ENCODE measurements at regions of chr11 and their contacts with region 1.

Region 1: DNA sequence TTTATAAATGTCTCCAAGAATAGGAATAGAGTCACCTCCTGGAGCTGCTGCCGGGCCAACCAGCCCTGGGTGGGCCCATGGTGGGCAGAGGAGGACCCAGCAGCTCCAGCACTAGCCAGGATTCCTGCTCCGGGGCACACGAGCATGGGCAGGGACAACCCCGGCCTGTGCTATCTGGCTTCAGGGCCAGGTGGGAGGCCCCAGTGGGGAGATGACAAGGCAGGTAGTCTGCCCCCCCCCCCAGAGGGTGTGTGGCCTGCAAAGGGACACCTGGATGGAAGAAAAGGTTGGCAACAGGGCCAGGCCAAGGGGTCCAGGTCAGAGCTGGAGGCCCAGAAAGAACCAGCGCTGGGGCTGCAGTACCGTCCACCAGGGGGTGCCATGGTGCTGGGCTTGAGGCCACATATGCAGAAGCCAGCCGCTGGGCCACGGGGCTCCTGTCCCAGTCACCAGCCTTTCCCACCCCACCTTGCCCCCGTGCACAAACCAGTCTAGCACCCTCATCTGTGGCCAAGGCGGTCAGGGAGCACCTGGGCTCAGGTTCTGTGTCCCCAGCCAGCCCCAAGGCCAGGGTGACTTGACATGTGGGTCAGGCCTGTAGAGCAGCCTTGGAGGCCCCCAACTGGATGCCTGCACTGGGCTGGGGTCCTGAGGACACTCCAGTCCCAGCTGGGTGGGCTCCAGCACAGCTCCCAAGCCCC is 3.5 kb downstream of the TSPAN32 start:
- DNase-seq: peak; percentile 74 to 90
- ATAC-seq: peak; percentile 16 to 66 (median 61)
- H3K4me3 ChIP-seq: peak overlapping the region; percentile 26
- H3K4me3 Mint-ChIP-seq: peak overlapping the region; percentile 98
- H3K27ac ChIP-seq: peak overlapping the region; percentile 42
- H3K27ac Mint-ChIP-seq: peak overlapping the region; percentile 86 to 96
- H3K4me1 ChIP-seq: peaks cover 76% of the 10 kb centered on the region
- H3K4me1 Mint-ChIP-seq: peaks cover 17 to 63% of the 10 kb centered on the region in 2 donors
- H3K27me3 ChIP-seq: no peaks in the 10 kb centered on the region
- H3K27me3 Mint-ChIP-seq: no peaks in the 10 kb centered on the region
- CTCF ChIP-seq: peak; percentile 65

Region 2: DNA sequence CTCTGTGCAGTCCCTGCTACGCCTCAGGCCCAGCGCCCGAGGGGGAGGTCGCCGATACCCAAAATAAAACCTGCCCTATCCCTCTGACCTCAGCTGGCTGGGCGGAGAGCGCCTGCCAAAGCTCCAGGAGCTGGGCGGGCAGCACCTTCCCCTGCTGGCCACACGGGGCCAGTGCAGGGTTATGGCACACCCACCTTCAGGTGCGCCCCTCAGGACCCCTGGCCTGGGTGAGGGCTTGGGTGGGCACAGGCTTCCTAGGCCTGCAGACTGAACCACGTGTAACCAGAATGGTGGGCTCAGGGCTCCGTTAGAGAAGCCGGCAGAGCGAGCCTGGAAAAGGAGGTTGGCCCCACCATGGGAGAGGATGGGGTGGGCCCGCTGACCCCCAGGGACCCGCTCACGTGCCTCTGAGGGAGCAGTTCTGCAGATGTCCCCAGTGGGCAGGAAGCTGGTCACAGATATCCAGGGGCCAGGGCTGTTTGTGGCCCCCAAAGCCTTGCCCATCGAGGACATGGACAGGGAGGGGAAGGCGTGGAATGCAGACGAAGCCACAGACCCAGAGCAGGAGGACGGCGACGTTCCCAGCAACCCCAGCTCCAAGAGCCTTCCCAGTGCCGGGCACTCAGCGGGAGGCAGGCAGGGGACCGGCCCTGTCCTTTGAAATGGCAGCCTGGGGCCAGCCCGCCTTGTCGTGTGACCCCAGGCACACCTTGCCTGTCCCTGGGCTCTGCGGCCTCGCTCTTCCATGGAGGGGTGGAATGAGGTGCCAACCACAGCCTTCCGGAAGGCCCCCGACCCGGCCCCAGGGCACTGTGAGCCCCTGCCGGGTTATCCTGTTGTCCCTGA is 387.4 kb before region 1 on chr11:
- intact Hi-C with region 1: no loop called
- DNase-seq: peak in 1 of 2 donors; percentile 43
- ATAC-seq: peak in 2 of 3 donors; percentile 39 to 49
- H3K4me3 ChIP-seq: no peak overlapping the region
- H3K4me3 Mint-ChIP-seq: no peak overlapping the region
- H3K27ac ChIP-seq: no peak overlapping the region
- H3K27ac Mint-ChIP-seq: no peak overlapping the region
- H3K4me1 ChIP-seq: peaks cover 24% of the 10 kb centered on the region
- H3K4me1 Mint-ChIP-seq: peaks cover 4 to 42% of the 10 kb centered on the region in 2 donors
- H3K27me3 ChIP-seq: peaks cover 2% of the 10 kb centered on the region
- H3K27me3 Mint-ChIP-seq: peaks cover 0 to 16% of the 10 kb centered on the region in 2 donors
- CTCF ChIP-seq: peak; percentile 46

Region 3: GRCh38 chr11:2002807-2003206 is 302.5 kb before region 1 on chr11:
- intact Hi-C with region 1: no loop called
- DNase-seq: no peak
- ATAC-seq: peak; percentile 57 to 61 (median 59)
- H3K4me3 ChIP-seq: no peak overlapping the region
- H3K4me3 Mint-ChIP-seq: no peak overlapping the region
- H3K27ac ChIP-seq: no peak overlapping the region
- H3K27ac Mint-ChIP-seq: no peak overlapping the region
- H3K4me1 ChIP-seq: no peaks in the 10 kb centered on the region
- H3K4me1 Mint-ChIP-seq: no peaks in the 10 kb centered on the region
- H3K27me3 ChIP-seq: no peaks in the 10 kb centered on the region
- H3K27me3 Mint-ChIP-seq: no peaks in the 10 kb centered on the region
- CTCF ChIP-seq: no peak

Region 4: DNA sequence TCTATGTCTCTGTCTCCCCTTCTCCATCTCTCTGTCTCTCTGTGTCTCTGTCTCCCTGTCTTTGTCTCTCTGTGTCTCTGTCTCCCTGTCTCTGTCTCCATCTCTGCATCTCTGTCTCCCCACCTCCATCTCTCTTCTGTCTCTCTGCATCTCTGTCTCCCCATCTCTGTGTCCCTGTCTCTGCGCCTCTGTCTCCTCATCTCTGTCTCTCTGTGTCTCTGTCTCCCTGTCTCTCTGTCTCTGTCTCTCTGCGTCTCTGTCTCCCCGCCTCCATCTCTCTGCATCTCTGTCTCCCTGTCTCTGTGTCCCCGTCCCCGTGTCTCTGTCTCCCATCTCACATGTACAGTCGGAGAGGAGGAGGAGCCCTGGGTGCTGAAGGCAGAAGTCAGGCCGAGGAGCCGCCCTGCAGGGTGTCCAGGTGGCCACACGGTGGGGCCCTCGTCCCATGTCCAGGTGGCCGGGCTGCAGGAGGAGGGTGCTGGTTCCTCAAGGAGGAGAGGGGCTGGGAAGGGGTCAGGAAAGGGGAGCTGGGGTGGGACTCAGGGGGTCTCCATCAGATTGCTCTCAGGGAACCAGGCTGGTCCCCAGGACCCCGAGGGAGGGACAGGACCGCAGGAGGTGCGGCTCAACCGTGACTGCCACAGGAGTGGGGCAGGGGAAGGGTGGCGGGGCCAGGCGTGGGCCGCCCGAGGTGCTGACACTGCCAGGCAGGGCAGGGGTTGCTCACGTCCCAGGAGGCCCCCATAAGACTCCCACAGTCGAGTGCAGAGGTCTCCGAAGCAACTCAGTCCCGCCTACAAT is 108.1 kb before region 1 on chr11:
- intact Hi-C with region 1: loop called (anchors 2 kb)
- DNase-seq: peak; percentile 74 to 84
- ATAC-seq: peak; percentile 85 to 98 (median 96)
- H3K4me3 ChIP-seq: no peak overlapping the region
- H3K4me3 Mint-ChIP-seq: no peak overlapping the region
- H3K27ac ChIP-seq: no peak overlapping the region
- H3K27ac Mint-ChIP-seq: no peak overlapping the region
- H3K4me1 ChIP-seq: peaks cover 33% of the 10 kb centered on the region
- H3K4me1 Mint-ChIP-seq: peaks cover 0 to 28% of the 10 kb centered on the region in 2 donors
- H3K27me3 ChIP-seq: no peaks in the 10 kb centered on the region
- H3K27me3 Mint-ChIP-seq: peaks cover 0 to 12% of the 10 kb centered on the region in 2 donors
- CTCF ChIP-seq: peak; percentile 83

Region 5: DNA sequence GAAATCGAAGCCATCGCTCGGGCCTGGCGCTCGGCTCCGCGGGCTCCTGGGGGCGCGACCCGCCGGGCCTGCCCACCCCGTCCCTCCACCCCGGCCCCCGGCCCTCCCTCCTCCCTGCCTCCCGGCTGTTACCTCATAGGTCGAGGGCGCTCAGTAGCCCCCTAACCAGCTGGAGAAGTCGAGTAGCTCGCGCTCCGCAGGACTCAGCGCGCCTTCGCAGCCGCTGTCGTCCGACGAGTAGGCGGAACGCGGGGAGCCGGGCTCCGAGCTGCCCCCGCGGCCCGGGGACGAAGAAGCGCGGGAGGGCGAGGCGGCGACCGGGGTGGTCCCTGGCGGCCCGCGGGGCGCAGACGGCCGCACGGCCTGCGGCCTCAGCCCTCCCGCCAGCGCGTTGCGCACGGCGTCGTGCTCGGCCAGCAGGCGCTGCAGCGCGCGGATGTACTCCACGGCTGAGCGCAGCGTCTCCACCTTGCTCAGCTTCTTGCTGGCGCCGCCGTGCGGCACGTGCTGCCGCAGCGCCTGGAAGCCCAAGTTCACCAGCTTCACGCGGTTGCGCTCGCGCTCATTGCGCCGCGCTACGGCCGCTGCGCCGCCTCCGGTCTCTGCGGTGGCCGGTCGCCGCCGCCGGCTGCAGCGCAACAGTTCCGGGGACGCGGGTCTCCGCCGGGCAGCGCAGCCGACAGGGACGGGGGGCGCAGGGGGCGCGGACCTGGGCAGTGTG is 35.5 kb before region 1 on chr11:
- intact Hi-C with region 1: loop called (anchors 5 kb)
- DNase-seq: peak; percentile 56 to 82
- ATAC-seq: peak; percentile 41 to 54 (median 51)
- H3K4me3 ChIP-seq: peak overlapping the region; percentile 49
- H3K4me3 Mint-ChIP-seq: peak overlapping the region; percentile 86
- H3K27ac ChIP-seq: peak overlapping the region; percentile 49
- H3K27ac Mint-ChIP-seq: peak overlapping the region in 1 of 2 donors; percentile 77
- H3K4me1 ChIP-seq: peaks cover 56% of the 10 kb centered on the region
- H3K4me1 Mint-ChIP-seq: peaks cover 30 to 49% of the 10 kb centered on the region in 2 donors
- H3K27me3 ChIP-seq: peaks cover 2% of the 10 kb centered on the region
- H3K27me3 Mint-ChIP-seq: no peaks in the 10 kb centered on the region
- CTCF ChIP-seq: peak; percentile 27

Region 6: DNA sequence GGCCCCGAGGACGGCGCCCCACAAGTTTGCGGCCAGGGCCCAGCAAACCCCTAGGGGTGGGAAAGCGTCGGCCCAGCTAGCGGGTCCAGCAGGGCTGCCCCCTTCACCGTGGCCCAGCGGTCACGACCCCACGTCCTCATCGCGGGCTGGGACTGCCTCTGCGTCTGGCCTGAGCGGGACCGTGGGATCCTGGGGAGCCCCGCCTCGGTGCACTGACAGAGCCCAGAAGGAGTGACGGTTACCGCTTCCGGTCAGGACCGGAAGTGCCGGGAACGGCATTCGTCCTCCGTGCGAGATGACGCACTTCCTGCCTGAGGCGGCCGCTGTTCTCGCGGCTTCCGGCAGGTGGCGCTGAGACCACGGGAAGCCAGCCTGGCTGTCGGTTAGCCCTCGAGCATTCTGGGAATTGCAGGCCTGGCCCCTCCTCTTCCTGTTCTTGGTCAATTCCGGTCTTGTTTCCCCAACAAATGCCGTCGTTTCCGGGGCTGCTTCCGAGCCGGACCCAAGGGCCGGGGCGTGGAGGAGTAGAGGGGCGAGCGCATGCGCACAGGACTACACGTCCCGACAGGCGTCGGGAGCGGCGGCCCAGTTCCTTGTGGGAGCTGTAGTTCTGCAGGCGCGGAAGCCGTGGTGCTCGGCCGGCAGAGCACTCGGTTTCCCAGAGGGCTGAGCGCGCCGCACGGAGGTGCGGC is 94.9 kb after region 1 on chr11 and contains the start of gene TSSC4:
- intact Hi-C with region 1: loop called (anchors 1 kb)
- DNase-seq: peak; percentile 100
- ATAC-seq: peak; percentile 85 to 93 (median 87)
- H3K4me3 ChIP-seq: peak within 1 kb of the TSS; percentile 88
- H3K4me3 Mint-ChIP-seq: peak within 1 kb of the TSS; percentile 98
- H3K27ac ChIP-seq: peak within 1 kb of the TSS; percentile 98
- H3K27ac Mint-ChIP-seq: peak within 1 kb of the TSS; percentile 86 to 92
- H3K4me1 ChIP-seq: peaks cover 28% of the 10 kb centered on the region
- H3K4me1 Mint-ChIP-seq: peaks cover 12 to 20% of the 10 kb centered on the region in 2 donors
- H3K27me3 ChIP-seq: no peaks in the 10 kb centered on the region
- H3K27me3 Mint-ChIP-seq: no peaks in the 10 kb centered on the region
- CTCF ChIP-seq: peak; percentile 90
- total RNA-seq, gene TSSC4: 52.8 to 67.9 (median 59.3) TPM

Region 7: DNA sequence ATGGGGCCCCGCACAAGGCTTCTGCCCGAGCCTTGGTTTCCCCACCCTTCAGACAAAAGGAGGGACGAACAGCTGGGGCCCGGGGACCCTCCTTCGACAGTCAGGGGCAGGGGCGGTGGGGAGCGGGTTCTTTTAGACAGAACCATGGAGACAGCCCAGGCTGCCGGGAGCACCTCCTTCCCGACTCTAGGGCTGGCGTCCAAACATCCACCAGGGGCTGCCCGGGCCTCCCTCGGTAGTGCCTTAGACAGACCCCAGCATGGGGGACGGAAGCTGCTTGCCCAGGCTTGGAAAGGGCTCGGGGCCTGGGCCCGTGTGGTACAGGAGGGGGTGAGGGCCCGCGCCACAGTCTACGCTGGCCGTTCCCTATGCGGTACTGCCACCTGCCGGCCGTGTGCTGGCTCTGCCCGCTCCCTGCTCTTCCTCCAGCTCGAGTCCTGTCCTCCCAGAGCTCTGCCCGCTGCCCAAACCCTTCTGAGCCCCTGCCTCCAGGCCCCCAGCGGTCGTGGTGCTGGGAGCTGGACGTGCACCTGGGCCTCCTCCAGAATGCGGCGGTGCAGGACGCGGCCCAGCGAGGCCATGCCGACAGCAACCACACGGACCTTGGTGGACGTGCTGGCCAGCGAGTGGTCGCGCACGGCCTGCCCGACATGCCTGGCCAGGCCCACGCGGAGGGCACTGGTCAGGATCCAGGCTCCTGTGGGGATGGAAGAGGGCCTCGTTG is 115.4 kb after region 1 on chr11:
- intact Hi-C with region 1: loop called (anchors 1 kb)
- DNase-seq: peak; percentile 72 to 89
- ATAC-seq: peak; percentile 85 to 98 (median 95)
- H3K4me3 ChIP-seq: no peak overlapping the region
- H3K4me3 Mint-ChIP-seq: no peak overlapping the region
- H3K27ac ChIP-seq: no peak overlapping the region
- H3K27ac Mint-ChIP-seq: no peak overlapping the region
- H3K4me1 ChIP-seq: peaks cover 15% of the 10 kb centered on the region
- H3K4me1 Mint-ChIP-seq: peaks cover 0 to 5% of the 10 kb centered on the region in 2 donors
- H3K27me3 ChIP-seq: no peaks in the 10 kb centered on the region
- H3K27me3 Mint-ChIP-seq: no peaks in the 10 kb centered on the region
- CTCF ChIP-seq: peak; percentile 91